GM12878 (cell line): ENCODE measurements at regions of chr10 and their contacts with region 1.

Region 1: DNA sequence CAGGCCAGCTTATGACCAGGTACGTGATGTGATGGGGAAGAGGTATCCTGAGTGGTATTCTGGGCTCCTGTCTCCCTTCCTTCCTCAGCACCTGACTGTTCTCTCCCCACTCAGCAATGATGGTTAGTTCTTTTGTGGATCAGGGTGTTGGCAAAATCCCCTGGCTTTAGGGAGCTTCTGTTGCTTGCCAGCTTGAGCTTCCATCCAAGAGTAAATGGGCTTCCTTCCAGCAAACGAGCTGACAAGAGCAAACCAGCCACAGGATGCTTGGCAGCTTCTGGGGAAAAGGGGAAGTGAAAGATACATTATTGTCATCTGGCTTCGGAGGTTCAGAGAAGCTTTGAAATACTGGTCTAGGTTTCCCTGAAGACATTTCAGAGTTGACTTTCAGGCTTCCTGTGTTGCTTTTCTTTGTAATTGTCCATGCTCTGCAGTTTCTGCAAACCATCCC is 5.2 kb downstream of the DUSP5 start:
- DNase-seq: peak; percentile 93
- ATAC-seq: peak; percentile 35
- H3K4me3 ChIP-seq: peak overlapping the region; percentile 95
- H3K27ac ChIP-seq: peak overlapping the region; percentile 91
- H3K4me1 ChIP-seq: peaks cover 49% of the 10 kb centered on the region
- H3K27me3 ChIP-seq: no peaks in the 10 kb centered on the region
- CTCF ChIP-seq: no peak
- EP300 ChIP-seq: peak; percentile 82 to 93; a peak in 3 of 4 replicates
- POLR2A ChIP-seq: peak; percentile 49
- RAD21 ChIP-seq: peak; percentile 21; the same call in 1 of the 2 replicates

Region 2: DNA sequence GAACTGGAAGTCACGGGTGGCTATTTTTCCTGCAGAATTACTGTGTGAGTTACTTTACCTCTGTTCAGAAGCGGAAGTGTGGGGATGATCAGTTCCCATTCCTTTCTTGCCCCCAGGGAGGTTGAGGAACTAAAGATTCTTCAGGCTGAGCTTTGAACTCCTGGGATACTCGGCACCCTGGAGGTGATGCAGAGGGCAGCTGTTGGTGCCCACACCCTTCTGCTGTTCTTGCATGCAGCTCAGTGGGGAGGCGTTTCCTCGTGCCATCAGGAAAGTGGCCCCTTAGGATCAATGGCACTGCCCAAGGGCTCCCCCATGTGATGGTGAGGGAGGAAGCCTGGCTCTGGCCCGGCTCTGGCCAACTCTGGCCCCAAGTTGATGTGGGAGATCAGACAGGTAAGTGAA is 340.1 kb before region 1 on chr10:
- CTCF ChIA-PET with region 1: no interaction called
- POLR2A ChIA-PET with region 1: no interaction called
- RAD21 ChIA-PET with region 1: no interaction called
- SMC1A ChIA-PET with region 1: no interaction called
- in situ Hi-C with region 1: no loop called
- intact Hi-C with region 1: no loop called
- DNase-seq: no peak
- ATAC-seq: peak; percentile 36; the same call in 1 of the 3 replicates
- H3K4me3 ChIP-seq: no peak overlapping the region
- H3K27ac ChIP-seq: no peak overlapping the region
- H3K4me1 ChIP-seq: no peaks in the 10 kb centered on the region
- H3K27me3 ChIP-seq: peaks cover 4 to 10% of the 10 kb centered on the region in 2 experiments
- CTCF ChIP-seq: no peak
- EP300 ChIP-seq: no peak
- POLR2A ChIP-seq: no peak
- RAD21 ChIP-seq: no peak

Region 3: DNA sequence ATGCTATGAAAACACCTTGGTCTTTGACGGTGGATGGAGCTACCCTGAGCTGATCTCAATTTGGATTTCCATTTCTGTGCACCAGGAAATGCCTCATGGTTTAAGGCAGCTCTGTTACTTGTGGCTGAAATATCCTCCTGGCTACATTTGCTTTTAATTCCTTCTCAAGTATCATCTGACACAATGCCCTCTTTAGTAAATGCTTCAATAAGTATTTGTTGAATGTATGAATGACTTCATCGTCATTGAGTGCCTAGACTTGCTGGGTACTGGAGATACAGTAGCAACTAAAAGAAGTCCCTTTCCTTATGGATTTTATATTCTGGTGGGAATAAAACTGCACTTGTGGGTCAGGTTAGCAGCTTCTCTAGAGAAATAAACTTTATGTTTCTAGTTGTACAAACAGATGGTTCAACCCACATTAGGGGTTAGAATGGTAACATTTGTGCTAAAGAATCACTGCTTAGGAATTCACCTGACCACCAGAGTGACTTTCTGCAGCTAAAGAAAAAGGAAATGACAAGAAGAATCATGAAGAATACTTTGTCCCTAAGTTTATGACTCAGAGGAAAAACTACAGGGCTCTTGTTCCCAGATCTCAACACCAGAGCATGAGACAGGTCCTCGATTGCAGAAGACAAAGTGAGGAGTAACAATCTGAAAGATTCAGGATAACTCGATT is 176.4 kb before region 1 on chr10:
- CTCF ChIA-PET with region 1: interaction called, 7 read pairs
- POLR2A ChIA-PET with region 1: interaction called, 14 read pairs
- RAD21 ChIA-PET with region 1: interaction called, 13 read pairs
- SMC1A ChIA-PET with region 1: interaction called, 73 read pairs
- in situ Hi-C with region 1: no loop called
- intact Hi-C with region 1: no loop called
- DNase-seq: peak; percentile 51
- ATAC-seq: peak; percentile 49
- H3K4me3 ChIP-seq: no peak overlapping the region
- H3K27ac ChIP-seq: peak overlapping the region; percentile 79
- H3K4me1 ChIP-seq: peaks cover 39% of the 10 kb centered on the region
- H3K27me3 ChIP-seq: no peaks in the 10 kb centered on the region
- CTCF ChIP-seq: no peak
- EP300 ChIP-seq: peak in 1 of 2 experiments; percentile 60; a peak in 1 of 4 replicates
- POLR2A ChIP-seq: no peak
- RAD21 ChIP-seq: no peak

Region 4: DNA sequence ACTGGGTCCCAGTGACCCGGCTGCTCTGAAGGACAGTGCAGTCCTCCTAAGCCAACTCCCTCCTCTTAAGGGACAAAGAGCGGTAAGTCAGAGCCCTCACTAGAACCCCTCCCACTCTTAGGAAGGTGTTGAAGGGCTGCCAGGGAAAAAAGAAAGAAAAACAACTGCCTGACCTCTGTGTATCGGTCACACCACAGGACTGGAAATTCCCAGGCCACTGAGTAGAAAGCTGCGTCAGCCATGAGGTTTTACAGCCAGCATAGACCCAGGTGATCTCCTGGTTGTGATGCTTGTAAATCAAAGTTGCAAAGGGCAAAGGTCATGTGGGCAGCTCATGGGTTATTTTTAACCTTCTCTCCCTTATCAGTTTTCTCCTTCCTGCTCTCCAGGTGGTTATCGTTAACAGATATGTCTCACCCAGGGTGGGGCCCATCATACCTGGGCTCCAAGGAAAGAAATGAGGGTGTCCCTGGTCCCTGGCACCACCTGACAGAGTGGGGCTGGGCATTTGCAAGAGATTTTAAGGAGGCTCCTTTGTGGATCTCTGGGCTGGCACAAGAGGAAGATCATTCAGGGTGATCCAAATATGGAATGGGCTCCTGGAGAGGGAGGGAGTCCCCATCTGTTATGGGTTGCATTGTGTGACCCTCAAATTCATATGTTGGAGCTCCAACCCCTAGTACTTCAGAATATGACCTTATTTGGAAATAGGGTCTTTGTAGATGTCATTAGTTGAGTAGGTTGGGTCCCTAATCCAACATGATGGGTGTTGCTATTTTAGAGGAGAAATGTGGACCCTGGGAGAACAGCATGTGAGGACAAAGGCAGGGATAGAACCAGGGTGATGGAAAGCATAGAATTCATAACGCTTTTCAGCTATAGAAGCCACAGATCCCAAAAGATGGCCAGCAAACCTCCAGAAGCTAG is 106.9 kb before region 1 on chr10:
- CTCF ChIA-PET with region 1: interaction called, 3 read pairs
- POLR2A ChIA-PET with region 1: interaction called, 5 read pairs
- RAD21 ChIA-PET with region 1: interaction called, 16 read pairs
- SMC1A ChIA-PET with region 1: interaction called, 9 read pairs
- in situ Hi-C with region 1: no loop called
- intact Hi-C with region 1: no loop called
- DNase-seq: peak; percentile 91
- ATAC-seq: peak; percentile 92
- H3K4me3 ChIP-seq: no peak overlapping the region
- H3K27ac ChIP-seq: peak overlapping the region; percentile 69
- H3K4me1 ChIP-seq: peaks cover 16% of the 10 kb centered on the region
- H3K27me3 ChIP-seq: no peaks in the 10 kb centered on the region
- CTCF ChIP-seq: no peak
- EP300 ChIP-seq: peak; percentile 99 to 100
- POLR2A ChIP-seq: no peak
- RAD21 ChIP-seq: peak; percentile 24; the same call in 1 of the 2 replicates

Region 5: DNA sequence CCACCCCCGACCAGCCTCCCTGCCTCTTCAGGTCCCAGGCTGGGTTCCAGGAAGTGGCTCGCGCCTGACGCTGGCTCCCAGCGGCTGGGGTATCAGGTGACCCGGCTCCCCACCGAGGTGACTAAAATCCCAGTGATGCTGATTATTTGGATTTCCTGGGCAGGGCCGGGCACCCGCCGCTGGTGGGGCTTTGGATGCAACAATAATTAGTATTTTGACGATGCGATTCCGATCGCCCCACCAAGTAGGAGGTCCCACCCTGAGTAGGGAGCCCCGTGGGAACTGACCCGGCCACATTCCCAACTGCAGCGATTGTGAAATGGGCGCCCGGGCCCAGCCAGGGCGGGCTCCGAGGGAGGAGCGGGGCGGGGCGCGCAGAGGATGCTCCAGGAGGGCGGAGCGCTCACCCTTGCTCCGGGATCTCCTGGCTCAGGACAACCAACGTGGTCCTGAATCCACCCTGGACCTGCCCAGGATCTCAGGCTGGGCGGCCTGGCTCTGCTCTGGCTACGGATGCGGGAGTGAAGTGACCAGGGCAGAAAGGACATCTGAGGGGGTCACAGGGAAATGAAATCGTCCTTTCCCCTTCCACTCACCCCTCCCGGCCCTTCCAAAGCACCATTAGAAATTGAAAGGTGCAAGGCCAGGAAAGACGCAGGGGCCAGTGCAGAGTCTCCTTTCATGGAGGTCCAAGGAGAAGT is 27.4 kb after region 1 on chr10:
- CTCF ChIA-PET with region 1: interaction called, 10 read pairs
- POLR2A ChIA-PET with region 1: interaction called, 23 read pairs
- RAD21 ChIA-PET with region 1: interaction called, 34 read pairs
- SMC1A ChIA-PET with region 1: interaction called, 44 read pairs
- in situ Hi-C with region 1: no loop called
- intact Hi-C with region 1: loop called (anchors 1 kb)
- DNase-seq: no peak
- ATAC-seq: peak; percentile 35
- H3K4me3 ChIP-seq: peak overlapping the region; percentile 30; the same call in 1 of the 2 replicates
- H3K27ac ChIP-seq: 0 out of 2 replicates have a peak overlapping the region, but pooled peaks have one; percentile 18
- H3K4me1 ChIP-seq: peaks cover 36% of the 10 kb centered on the region
- H3K27me3 ChIP-seq: no peaks in the 10 kb centered on the region
- CTCF ChIP-seq: no peak
- EP300 ChIP-seq: no peak
- POLR2A ChIP-seq: no peak
- RAD21 ChIP-seq: no peak

Region 6: GRCh38 chr10:110535958-110536891 is 33.3 kb after region 1 on chr10:
- CTCF ChIA-PET with region 1: interaction called, 6 read pairs
- POLR2A ChIA-PET with region 1: interaction called, 15 read pairs
- RAD21 ChIA-PET with region 1: interaction called, 34 read pairs
- SMC1A ChIA-PET with region 1: interaction called, 26 read pairs
- in situ Hi-C with region 1: no loop called
- intact Hi-C with region 1: loop called (anchors 1 kb)
- DNase-seq: peak; percentile 87
- ATAC-seq: peak; percentile 91
- H3K4me3 ChIP-seq: no peak overlapping the region; the same call in 1 of the 2 replicates
- H3K27ac ChIP-seq: peak overlapping the region; percentile 67
- H3K4me1 ChIP-seq: peaks cover 29% of the 10 kb centered on the region
- H3K27me3 ChIP-seq: no peaks in the 10 kb centered on the region
- CTCF ChIP-seq: peak; percentile 28 to 48 (median 37); a peak in 4 of 6 replicates
- EP300 ChIP-seq: peak; percentile 84 to 85; a peak in 3 of 4 replicates
- POLR2A ChIP-seq: no peak
- RAD21 ChIP-seq: peak; percentile 68

Region 7: GRCh38 chr10:110561292-110561691 is 58.4 kb after region 1 on chr10:
- CTCF ChIA-PET with region 1: no interaction called
- POLR2A ChIA-PET with region 1: no interaction called
- RAD21 ChIA-PET with region 1: no interaction called
- SMC1A ChIA-PET with region 1: no interaction called
- in situ Hi-C with region 1: no loop called
- intact Hi-C with region 1: no loop called
- DNase-seq: no peak
- ATAC-seq: no peak
- H3K4me3 ChIP-seq: no peak overlapping the region
- H3K27ac ChIP-seq: no peak overlapping the region
- H3K4me1 ChIP-seq: no peaks in the 10 kb centered on the region
- H3K27me3 ChIP-seq: no peaks in the 10 kb centered on the region
- CTCF ChIP-seq: no peak
- EP300 ChIP-seq: no peak
- POLR2A ChIP-seq: no peak
- RAD21 ChIP-seq: no peak

Region 8: GRCh38 chr10:110993024-110993693 is 490.3 kb after region 1 on chr10:
- CTCF ChIA-PET with region 1: no interaction called
- POLR2A ChIA-PET with region 1: no interaction called
- RAD21 ChIA-PET with region 1: no interaction called
- SMC1A ChIA-PET with region 1: no interaction called
- in situ Hi-C with region 1: no loop called
- intact Hi-C with region 1: no loop called
- DNase-seq: peak; percentile 13
- ATAC-seq: peak; percentile 85
- H3K4me3 ChIP-seq: no peak overlapping the region
- H3K27ac ChIP-seq: peak overlapping the region; percentile 51; the same call in 1 of the 2 replicates
- H3K4me1 ChIP-seq: peaks cover 11% of the 10 kb centered on the region
- H3K27me3 ChIP-seq: no peaks in the 10 kb centered on the region
- CTCF ChIP-seq: no peak
- EP300 ChIP-seq: no peak
- POLR2A ChIP-seq: no peak
- RAD21 ChIP-seq: no peak